ENCODE measurements at regions of chr1 and their contacts with region 1.

Region 1: DNA sequence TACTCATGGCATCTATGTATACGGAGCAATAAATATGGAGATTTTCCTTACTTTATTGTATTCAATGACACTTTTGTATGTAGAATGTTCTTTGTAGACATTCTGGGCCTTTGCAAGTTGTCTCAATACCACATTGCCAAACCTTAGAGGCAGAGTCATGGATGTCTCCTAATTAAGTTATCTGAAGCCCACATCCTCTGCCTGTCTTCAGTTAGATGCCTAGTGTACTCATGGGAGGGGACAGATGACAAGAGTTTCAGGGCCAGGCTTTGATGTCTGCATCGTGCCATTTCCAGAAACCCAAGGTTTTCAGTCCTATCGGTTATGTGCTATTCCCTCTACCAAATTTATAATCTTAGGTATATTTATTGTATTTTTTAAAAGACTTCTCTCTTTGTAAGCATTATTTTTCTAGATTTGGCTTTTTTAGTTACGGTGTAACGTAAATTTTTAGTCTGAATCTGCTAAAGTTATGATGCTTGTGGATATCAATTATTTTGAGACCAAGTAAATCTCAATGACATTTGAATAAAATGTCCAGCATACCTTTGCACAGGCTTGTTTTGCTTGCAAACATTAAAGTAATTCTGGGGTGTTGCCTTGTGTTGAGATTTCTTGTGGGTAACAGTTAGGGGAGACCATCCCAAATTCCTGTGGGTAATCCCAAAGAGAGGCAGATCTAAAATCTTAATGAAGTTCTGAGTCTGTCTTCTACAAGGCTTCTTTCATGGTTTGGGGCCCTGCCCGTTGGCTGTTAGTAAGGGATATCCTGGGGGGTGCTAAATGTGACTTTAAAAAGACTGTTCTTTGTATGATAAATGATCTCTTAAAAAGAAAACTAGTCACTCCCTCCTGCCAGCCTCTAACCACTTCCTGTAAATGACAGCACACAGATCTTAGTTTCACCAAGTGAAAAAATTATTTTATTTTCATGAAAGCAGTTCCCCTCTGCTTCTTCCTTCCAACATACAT is 8.0 kb upstream of the MACF1 start:
- DNase-seq: peak; percentile 24 to 88 (median 68)
- ATAC-seq: peak; percentile 65 to 90
- H3K4me3 Mint-ChIP-seq: peak overlapping the region; percentile 59 to 83 (median 74)
- H3K27ac Mint-ChIP-seq: peak overlapping the region; percentile 85 to 98 (median 94)
- H3K4me1 Mint-ChIP-seq: peaks cover 38 to 85% (median 84%) of the 10 kb centered on the region in 4 donors
- H3K27me3 Mint-ChIP-seq: no peaks in the 10 kb centered on the region

Region 2: DNA sequence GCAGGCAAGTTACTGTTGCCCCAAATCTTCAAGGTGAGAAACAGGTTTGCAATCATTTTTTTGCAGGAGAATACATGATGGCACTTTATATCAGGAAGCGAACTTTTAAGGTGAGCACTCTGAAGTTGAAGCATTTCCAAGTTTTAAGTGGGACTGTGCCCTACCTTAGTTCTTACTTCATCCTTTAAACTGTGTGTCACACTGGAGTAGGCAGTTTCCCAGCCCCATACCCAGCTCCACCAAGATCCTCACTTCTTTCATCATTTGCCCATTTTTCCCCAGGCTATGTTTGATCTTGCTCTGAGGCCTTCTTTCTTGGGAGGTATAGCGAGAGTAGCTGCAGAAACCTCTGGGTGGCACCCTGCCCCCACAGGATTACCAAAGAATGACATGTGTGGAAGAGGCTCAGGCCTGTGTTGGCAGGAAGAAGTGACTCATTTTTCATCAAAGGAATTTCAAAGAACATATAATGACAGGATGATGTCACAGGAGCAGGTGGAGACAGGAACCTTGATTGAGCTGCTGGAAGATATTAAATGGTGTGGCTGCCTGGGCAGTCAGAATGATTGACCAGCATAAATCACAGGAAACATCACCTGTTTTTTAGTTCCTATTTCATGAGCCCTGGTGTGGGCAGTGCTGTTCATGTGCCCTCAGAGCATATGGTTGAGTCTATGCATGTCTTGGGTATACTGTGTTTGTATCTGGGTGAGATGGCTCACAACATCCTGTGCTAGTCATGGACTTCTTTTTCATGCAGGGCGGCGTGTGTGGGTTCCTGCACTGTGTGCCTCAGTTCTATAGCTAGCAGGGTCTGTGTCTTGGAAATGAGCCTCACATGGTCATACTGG is 12.8 kb before region 1 on chr1:
- POLR2A ChIA-PET with region 1: interaction called, 11 read pairs
- DNase-seq: peak; percentile 59 to 93 (median 82)
- ATAC-seq: peak; percentile 86 to 88
- H3K4me3 Mint-ChIP-seq: peak overlapping the region in 8 of 10 donors; percentile 14 to 71 (median 50)
- H3K27ac Mint-ChIP-seq: peak overlapping the region; percentile 90 to 100 (median 96)
- H3K4me1 Mint-ChIP-seq: peaks cover 11 to 42% (median 28%) of the 10 kb centered on the region in 4 donors
- H3K27me3 Mint-ChIP-seq: no peaks in the 10 kb centered on the region

Region 3: DNA sequence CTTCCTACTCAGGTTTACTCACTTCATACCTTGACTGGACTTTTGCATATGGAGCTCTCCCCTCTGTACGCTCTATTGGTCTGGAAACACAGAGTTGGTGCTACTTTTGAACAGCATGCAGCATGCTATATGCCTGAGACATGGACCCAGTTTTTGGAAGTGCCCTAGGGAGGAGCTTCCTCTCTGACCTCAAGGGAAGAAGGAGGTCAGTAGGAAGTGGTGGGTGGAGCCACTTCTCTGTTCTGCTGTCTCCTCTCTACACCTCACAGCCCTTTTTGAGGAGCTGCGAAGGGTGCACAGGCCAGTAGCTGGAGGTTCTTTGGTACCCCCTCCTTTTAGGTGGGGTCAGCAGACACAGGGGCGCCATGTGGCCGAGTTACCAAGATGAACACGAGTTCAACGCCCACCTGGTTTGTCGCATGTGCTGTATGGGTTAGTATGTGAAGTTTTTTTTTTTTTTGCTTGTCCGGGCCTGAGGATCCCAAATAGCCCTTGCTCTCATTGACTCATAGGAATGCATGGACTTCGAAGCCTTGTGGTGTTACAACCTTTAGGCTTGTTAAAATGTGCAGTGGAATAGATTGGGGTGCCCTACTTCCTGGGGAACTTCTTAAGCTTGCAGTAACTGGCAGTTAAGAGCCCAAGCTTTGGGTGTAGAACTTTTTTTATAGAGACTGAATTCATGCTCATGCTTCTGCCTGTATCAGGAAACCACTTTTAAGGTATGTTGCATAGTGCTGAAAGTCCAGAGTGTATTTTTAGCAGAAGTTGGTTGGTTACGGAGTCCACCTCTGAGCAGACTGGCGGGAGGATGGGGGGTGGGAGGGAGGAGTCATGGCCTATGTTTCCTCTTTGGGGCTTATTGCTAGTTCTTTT is 18.7 kb after region 1 on chr1:
- POLR2A ChIA-PET with region 1: interaction called, 35 read pairs
- DNase-seq: peak in 3 of 10 donors; percentile 18 to 47 (median 43)
- ATAC-seq: peak; percentile 79 to 81
- H3K4me3 Mint-ChIP-seq: peak overlapping the region; percentile 85 to 98 (median 94)
- H3K27ac Mint-ChIP-seq: peak overlapping the region; percentile 88 to 98 (median 93)
- H3K4me1 Mint-ChIP-seq: peaks cover 26 to 67% (median 58%) of the 10 kb centered on the region in 4 donors
- H3K27me3 Mint-ChIP-seq: no peaks in the 10 kb centered on the region

Region 4: DNA sequence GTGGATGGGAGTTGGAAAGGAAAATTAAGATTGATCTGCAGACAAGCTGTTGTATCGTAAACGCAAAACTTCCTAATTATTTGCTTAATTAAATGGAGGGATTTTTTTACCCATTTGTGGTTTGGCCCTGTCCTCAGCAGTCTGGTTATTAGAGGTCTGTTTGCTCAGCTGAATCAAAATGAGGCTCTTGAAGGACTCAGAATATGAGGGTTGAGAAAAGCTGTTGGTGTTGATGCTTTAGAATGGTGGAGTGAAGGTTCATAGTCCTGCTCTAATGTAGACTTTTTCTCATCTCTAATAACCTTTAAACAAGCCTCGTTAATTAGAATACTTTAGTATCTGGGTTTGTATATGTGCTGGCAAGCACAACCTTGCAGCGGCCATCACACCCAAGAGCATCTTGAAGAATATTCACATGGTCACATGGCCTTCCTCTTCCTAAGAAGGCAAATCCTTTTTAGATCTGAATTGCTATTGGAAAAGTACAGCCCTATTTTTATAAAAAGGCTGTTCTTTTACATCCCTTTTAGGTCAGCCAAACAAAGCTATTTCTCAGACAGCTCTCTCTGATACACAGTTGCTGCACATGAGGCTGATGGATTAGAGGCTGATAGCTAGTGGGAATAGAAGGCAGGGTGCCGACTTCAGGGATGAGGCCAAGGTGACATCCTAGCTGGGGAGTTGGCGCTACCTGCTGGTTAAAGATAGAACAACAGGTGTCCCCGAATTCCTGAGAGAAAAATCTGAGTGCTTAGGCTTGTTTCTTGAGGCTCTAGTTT is 61.8 kb after region 1 on chr1:
- POLR2A ChIA-PET with region 1: interaction called, 58 read pairs
- DNase-seq: peak; percentile 44 to 79 (median 62)
- ATAC-seq: peak; percentile 44 to 72
- H3K4me3 Mint-ChIP-seq: no peak overlapping the region
- H3K27ac Mint-ChIP-seq: peak overlapping the region in 8 of 10 donors; percentile 10 to 84 (median 70)
- H3K4me1 Mint-ChIP-seq: peaks cover 10 to 39% (median 30%) of the 10 kb centered on the region in 4 donors
- H3K27me3 Mint-ChIP-seq: no peaks in the 10 kb centered on the region

Measured in naive thymus-derived CD8-positive, alpha-beta T cell (primary cell).